ENCODE measurements at regions of chr11 and their contacts with region 1.

Region 1: GRCh38 chr11:111860257-111860656 is 11.1 kb downstream of the ALG9 start:
- DNase-seq: no peak
- ATAC-seq: no peak
- H3K4me3 ChIP-seq: no peak overlapping the region
- H3K4me3 Mint-ChIP-seq: no peak overlapping the region
- H3K27ac ChIP-seq: no peak overlapping the region
- H3K27ac Mint-ChIP-seq: no peak overlapping the region
- H3K4me1 ChIP-seq: no peaks in the 10 kb centered on the region
- H3K4me1 Mint-ChIP-seq: no peaks in the 10 kb centered on the region
- H3K27me3 ChIP-seq: no peaks in the 10 kb centered on the region
- H3K27me3 Mint-ChIP-seq: no peaks in the 10 kb centered on the region

Region 2: GRCh38 chr11:111878849-111879636 is 18.8 kb after region 1 on chr11 and contains the starts of genes CFAP68 and FDXACB1:
- CTCF ChIA-PET with region 1: interaction called in 1 of 2 experiments, 3 read pairs
- POLR2A ChIA-PET with region 1: interaction called in 1 of 2 experiments, 16 read pairs
- DNase-seq: peak; percentile 91 to 98 (median 95)
- ATAC-seq: peak; percentile 85 to 91 (median 87)
- H3K4me3 ChIP-seq: peak within 1 kb of the TSS; percentile 78 to 80
- H3K4me3 Mint-ChIP-seq: peak within 1 kb of the TSS; percentile 81 to 91 (median 91)
- H3K27ac ChIP-seq: peak within 1 kb of the TSS; percentile 98
- H3K27ac Mint-ChIP-seq: peak within 1 kb of the TSS; percentile 97 to 98
- H3K4me1 ChIP-seq: peaks cover 2 to 12% of the 10 kb centered on the region in 2 experiments
- H3K4me1 Mint-ChIP-seq: peaks cover 16 to 25% (median 22%) of the 10 kb centered on the region in 3 donors
- H3K27me3 ChIP-seq: no peaks in the 10 kb centered on the region
- H3K27me3 Mint-ChIP-seq: no peaks in the 10 kb centered on the region
- total RNA-seq, gene CFAP68: 12.0 to 18.6 (median 16.7) TPM
- total RNA-seq, gene FDXACB1: 3.8 to 6.0 (median 4.3) TPM

Region 3: GRCh38 chr11:112156956-112157766 is 296.9 kb after region 1 on chr11:
- CTCF ChIA-PET with region 1: no interaction called
- POLR2A ChIA-PET with region 1: no interaction called
- DNase-seq: no peak
- ATAC-seq: no peak
- H3K4me3 ChIP-seq: no peak overlapping the region
- H3K4me3 Mint-ChIP-seq: no peak overlapping the region
- H3K27ac ChIP-seq: no peak overlapping the region
- H3K27ac Mint-ChIP-seq: no peak overlapping the region
- H3K4me1 ChIP-seq: no peaks in the 10 kb centered on the region
- H3K4me1 Mint-ChIP-seq: no peaks in the 10 kb centered on the region
- H3K27me3 ChIP-seq: no peaks in the 10 kb centered on the region
- H3K27me3 Mint-ChIP-seq: peaks cover 0 to 4% of the 10 kb centered on the region in 2 donors

Measured in T-cell (primary cell).